A673 (cell line): ENCODE measurements at regions of chr5 and their contacts with region 1.

Region 1: GRCh38 chr5:77560677-77561263 is 68.7 kb upstream of the WDR41 start:
- DNase-seq: peak; percentile 69
- H3K4me3 ChIP-seq: no peak overlapping the region
- H3K27ac ChIP-seq: no peak overlapping the region
- H3K4me1 ChIP-seq: no peaks in the 10 kb centered on the region
- H3K27me3 ChIP-seq: peaks cover 27% of the 10 kb centered on the region
- CTCF ChIP-seq: peak; percentile 72

Region 2: DNA sequence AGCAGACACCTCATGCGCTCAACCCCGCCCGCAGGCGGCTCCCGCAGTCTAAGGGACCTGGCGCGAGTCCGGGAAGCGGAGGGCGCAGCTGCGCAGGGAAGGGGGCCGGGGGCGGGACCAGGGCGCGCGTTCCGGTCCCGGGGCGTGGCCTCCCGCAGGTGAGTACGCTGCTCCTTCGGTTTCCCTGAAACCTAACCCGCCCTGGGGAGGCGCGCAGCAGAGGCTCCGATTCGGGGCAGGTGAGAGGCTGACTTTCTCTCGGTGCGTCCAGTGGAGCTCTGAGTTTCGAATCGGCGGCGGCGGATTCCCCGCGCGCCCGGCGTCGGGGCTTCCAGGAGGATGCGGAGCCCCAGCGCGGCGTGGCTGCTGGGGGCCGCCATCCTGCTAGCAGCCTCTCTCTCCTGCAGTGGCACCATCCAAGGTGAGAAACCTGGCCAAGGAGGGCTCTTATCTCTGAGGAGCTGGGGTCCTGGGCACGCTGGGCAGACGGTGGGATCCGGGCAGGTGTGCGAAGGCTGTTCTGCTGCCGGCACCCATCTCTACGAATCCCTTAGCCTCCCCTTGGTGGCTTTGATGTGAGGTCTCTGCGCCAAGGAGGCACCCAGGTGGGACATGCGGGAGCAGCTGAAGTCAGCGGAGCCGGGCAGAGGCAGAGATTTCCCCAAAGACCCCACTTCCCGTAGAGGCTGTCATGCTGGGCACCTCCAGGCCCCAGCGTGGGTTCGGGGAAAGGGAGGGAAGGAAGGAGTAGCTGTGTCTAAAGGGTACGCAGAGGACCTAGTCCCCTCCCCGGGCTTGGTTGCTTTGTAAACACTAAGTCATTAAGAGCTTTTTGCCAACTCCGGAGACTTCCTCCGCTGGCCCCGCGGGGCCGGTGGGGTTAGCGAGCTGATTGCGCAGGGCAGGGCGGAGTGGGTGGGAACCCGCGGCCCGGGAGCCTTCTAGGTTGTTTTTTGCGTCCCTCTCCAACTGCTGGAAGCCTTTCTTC is 741.6 kb before region 1 on chr5 and contains the start of gene F2RL1:
- CTCF ChIA-PET with region 1: no interaction called
- POLR2A ChIA-PET with region 1: no interaction called
- intact Hi-C with region 1: no loop called
- DNase-seq: peak; percentile 60
- H3K4me3 ChIP-seq: peak within 1 kb of the TSS; percentile 55
- H3K27ac ChIP-seq: no peak within 1 kb of the TSS
- H3K4me1 ChIP-seq: no peaks in the 10 kb centered on the region
- H3K27me3 ChIP-seq: no peaks in the 10 kb centered on the region
- CTCF ChIP-seq: no peak
- total RNA-seq, gene F2RL1: 0.32 and 0.39 TPM in 2 replicates

Region 3: DNA sequence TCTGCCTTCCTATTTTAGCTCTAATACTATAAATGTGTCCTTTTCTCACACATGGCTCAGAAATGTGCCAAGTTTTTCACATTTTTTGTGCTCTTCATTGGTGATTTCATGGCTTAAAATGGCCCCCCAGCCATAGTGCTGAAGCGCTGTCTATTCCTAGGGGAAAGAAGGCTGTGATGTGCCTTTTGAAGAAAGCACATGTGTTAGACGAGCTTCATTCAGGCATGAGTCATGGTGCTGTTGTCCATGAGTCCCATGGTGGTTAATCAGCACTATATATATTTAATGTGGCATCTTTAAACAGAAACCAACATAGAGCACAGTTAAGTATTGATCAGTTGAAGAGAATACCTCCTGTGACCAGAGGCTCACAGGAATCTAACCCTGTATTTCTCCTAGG is 294.5 kb before region 1 on chr5:
- CTCF ChIA-PET with region 1: no interaction called
- POLR2A ChIA-PET with region 1: no interaction called
- intact Hi-C with region 1: no loop called
- DNase-seq: no peak
- H3K4me3 ChIP-seq: no peak overlapping the region
- H3K27ac ChIP-seq: no peak overlapping the region
- H3K4me1 ChIP-seq: no peaks in the 10 kb centered on the region
- H3K27me3 ChIP-seq: no peaks in the 10 kb centered on the region
- CTCF ChIP-seq: no peak

Region 4: GRCh38 chr5:77620426-77620825 is 59.7 kb after region 1 on chr5:
- CTCF ChIA-PET with region 1: no interaction called
- POLR2A ChIA-PET with region 1: no interaction called
- intact Hi-C with region 1: no loop called
- DNase-seq: no peak
- H3K4me3 ChIP-seq: no peak overlapping the region
- H3K27ac ChIP-seq: no peak overlapping the region
- H3K4me1 ChIP-seq: no peaks in the 10 kb centered on the region
- H3K27me3 ChIP-seq: peaks cover 77% of the 10 kb centered on the region
- CTCF ChIP-seq: no peak

Region 5: GRCh38 chr5:78008356-78008967 is 447.7 kb after region 1 on chr5:
- CTCF ChIA-PET with region 1: no interaction called
- POLR2A ChIA-PET with region 1: no interaction called
- intact Hi-C with region 1: loop called (anchors 10 kb)
- DNase-seq: peak; percentile 34
- H3K4me3 ChIP-seq: no peak overlapping the region
- H3K27ac ChIP-seq: no peak overlapping the region
- H3K4me1 ChIP-seq: no peaks in the 10 kb centered on the region
- H3K27me3 ChIP-seq: no peaks in the 10 kb centered on the region
- CTCF ChIP-seq: peak; percentile 74

Region 6: DNA sequence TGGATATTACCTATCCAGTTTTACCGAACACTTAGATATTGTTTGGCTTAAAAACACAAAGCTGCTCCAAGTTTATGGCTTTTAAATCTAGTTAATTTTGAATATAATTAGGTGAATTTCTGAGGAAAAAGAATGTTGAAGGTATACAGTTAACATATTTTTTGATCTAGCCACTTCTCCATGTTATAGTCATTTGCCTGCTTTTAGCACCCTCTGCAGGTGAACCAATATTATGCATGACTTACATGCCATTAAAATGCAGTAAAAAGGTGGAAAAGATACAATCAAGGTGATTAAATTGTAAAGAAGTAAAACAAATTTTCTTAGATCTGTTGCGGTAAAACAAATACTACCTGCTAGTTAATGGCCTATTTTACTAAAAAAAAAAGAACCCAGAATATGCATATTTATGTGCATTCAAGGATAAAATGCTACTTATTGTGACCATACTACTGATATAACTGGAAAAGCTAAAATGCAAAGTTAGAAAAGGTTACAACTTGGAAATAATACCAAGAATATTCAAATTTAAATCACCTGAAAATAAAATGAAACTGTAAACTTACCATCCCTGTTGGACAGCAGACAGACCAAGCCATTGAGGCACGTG is 601.6 kb after region 1 on chr5:
- CTCF ChIA-PET with region 1: no interaction called
- POLR2A ChIA-PET with region 1: no interaction called
- intact Hi-C with region 1: loop called (anchors 10 kb)
- DNase-seq: peak; percentile 49
- H3K4me3 ChIP-seq: no peak overlapping the region
- H3K27ac ChIP-seq: no peak overlapping the region
- H3K4me1 ChIP-seq: no peaks in the 10 kb centered on the region
- H3K27me3 ChIP-seq: no peaks in the 10 kb centered on the region
- CTCF ChIP-seq: peak; percentile 75

Region 7: DNA sequence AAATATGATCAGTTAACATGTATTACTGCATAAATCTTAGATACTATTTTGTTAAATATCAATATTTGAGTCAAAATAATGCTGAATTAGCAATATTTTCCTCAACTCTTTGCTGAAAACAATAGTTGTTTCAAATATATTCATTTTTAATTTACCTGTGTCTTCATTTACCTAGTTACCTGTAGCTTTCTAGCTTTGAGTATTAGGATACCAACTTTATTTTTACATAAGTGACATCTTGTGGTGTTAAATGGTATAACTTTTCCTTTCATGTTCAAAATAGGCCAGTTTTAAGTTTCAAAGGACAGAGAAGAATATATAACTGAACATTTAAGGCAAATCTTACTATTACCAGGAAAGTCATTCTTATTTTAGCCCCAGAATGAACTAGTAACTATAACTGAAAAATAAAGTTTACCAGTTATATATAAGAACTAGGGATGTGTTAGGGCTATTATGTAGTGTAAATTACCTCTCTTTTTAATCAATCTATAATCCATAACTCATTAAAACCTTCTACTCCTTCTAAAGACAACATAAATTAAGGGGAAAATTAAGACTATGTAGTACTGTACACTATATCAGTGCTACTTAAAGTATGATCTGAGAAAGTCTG is 708.4 kb after region 1 on chr5:
- CTCF ChIA-PET with region 1: no interaction called
- POLR2A ChIA-PET with region 1: no interaction called
- intact Hi-C with region 1: loop called (anchors 5 kb)
- DNase-seq: no peak
- H3K4me3 ChIP-seq: no peak overlapping the region
- H3K27ac ChIP-seq: no peak overlapping the region
- H3K4me1 ChIP-seq: no peaks in the 10 kb centered on the region
- H3K27me3 ChIP-seq: no peaks in the 10 kb centered on the region
- CTCF ChIP-seq: peak; percentile 55; the same call in 1 of the 2 replicates